AG04450 (cell line): ENCODE measurements at regions of chr2 and their contacts with region 1.

Region 1: GRCh38 chr2:197191177-197191939 is 119.2 kb downstream of the ANKRD44 start:
- DNase-seq: no peak
- H3K4me3 ChIP-seq: no peak overlapping the region
- H3K27ac ChIP-seq: no peak overlapping the region
- H3K27me3 ChIP-seq: no peaks in the 10 kb centered on the region
- CTCF ChIP-seq: peak; percentile 69

Region 2: DNA sequence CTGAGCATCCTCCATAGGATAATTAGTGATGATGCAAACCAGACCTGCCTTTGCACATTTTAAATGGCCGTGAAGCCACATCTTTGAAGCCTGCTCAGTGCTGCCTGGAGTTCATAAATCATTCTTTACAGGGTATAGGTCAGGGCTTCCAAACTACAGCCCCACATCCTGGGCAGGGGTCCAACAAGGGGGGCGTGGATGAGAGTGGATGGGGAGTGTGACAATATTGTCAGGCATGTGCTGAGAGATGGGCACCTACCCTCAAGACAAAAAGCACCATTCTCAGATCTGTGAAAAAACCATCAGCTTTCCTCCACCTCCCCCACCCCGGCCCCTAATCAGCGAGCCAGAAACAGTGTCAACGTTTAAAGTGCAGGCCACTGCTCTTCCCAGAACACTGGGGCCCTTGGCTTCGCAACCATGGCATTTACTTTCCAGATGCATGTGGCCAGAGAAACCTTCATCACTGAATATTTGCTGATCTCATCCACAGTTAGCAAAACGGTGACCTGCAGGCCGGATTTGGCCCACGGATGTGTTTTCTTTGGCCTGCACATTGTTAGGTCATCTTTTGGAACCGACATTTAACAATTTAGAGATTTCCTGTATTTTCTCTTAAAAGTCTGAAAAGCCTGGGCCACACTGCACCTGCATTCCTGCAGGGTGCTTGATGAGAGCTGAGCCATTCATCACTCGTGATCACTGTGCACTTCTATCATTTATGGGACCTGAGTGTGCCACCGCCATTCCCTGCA is 11.4 kb before region 1 on chr2:
- CTCF ChIA-PET with region 1: interaction called, 22 read pairs
- POLR2A ChIA-PET with region 1: no interaction called
- DNase-seq: peak; percentile 52
- H3K4me3 ChIP-seq: no peak overlapping the region
- H3K27ac ChIP-seq: peak overlapping the region; percentile 79
- H3K27me3 ChIP-seq: no peaks in the 10 kb centered on the region
- CTCF ChIP-seq: no peak

Region 3: DNA sequence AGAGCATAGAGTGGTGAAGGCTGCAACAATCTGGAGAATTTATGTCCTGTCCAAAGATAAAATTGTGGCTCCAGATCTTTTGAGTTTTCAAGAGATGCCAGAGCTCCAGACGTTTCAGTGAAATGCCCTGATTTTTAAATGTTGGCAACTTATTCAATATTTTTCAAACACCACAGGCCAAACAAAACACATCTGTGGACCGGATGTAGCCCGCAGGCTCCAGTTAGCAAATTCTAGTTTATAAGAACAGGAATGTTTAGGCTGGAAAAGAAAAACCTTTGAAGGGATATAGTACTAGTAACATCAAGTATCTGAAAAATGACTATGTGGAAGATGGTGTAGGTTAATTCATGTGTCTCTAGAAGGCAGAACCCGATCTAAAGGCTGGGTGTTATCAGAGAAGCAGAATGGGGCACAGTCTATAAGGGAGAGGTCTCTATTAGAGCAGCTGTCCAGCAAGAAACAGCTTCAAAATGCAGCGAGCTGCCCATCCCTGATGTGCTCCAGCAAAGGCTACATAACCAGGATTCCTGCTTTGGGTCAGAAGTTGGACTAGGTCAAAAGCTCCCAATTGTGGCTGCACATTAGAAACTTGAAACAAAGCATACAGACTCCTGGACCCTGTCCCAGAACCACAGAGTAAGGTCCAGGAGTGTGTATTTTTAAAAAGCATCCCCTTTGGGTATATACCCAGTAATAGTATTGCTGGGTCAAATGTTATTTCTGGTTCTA is 13.3 kb after region 1 on chr2:
- CTCF ChIA-PET with region 1: interaction called, 21 read pairs
- POLR2A ChIA-PET with region 1: no interaction called
- DNase-seq: no peak
- H3K4me3 ChIP-seq: no peak overlapping the region
- H3K27ac ChIP-seq: no peak overlapping the region
- H3K27me3 ChIP-seq: no peaks in the 10 kb centered on the region
- CTCF ChIP-seq: no peak